Testis (tissue), 5 donors: ENCODE measurements at regions of chr19 and their contacts with region 1.

Region 1: DNA sequence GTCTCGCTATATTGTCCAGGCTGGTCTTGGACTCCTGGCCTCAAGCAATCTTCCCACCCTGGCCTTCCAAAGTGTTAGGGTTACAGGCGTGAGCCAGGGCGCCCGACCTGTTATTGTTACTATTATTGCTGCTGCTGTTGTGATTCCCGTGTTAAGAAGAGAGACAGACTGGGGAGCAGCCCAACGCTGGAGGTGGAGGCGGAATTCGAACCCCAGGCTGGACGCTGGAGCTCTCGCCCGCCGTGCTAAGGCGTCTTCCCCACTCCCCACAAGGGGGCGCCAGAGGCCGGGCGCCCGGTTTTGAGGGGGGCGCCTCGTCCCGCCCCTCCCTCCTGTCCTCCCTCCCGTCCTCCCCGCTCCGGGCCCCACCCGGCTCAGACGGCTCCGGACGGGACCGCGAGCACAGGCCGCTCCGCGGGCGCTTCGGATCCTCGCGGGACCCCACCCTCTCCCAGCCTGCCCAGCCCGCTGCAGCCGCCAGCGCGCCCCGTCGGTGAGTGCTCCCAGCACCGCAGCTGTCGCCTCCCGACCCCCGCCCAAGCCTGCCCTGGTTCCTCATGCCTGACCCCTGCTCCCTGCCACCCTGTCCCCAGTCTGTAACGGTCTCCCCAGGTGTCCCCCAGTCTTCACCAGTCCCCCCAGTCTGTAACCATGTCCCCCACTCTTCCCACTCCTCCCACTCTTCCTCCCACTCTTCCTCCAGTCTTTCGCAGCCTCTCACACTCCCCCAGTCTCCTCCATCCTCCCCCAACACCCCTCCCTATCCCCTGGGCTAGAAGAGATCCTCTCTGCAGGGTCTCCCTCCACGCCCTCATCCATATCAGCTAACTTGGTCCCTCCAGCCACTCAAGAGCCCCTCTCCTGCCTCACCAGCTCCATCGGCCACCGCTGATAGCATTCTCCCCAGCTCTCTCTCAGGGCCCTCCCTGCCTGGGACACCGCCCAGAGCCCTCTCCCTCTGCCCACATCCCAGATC is at the start of gene EHD2:
- DNase-seq: peak; percentile 56
- H3K4me3 ChIP-seq: peak within 1 kb of the TSS; percentile 68 to 72
- H3K27ac ChIP-seq: peak within 1 kb of the TSS; percentile 60 to 88
- H3K4me1 ChIP-seq: peaks cover 17% of the 10 kb centered on the region
- H3K27me3 ChIP-seq: no peaks in the 10 kb centered on the region
- CTCF ChIP-seq: peak; percentile 90 to 94 (median 93)
- POLR2A ChIP-seq: no peak
- total RNA-seq, gene EHD2: 26.8 to 33.9 TPM

Region 2: DNA sequence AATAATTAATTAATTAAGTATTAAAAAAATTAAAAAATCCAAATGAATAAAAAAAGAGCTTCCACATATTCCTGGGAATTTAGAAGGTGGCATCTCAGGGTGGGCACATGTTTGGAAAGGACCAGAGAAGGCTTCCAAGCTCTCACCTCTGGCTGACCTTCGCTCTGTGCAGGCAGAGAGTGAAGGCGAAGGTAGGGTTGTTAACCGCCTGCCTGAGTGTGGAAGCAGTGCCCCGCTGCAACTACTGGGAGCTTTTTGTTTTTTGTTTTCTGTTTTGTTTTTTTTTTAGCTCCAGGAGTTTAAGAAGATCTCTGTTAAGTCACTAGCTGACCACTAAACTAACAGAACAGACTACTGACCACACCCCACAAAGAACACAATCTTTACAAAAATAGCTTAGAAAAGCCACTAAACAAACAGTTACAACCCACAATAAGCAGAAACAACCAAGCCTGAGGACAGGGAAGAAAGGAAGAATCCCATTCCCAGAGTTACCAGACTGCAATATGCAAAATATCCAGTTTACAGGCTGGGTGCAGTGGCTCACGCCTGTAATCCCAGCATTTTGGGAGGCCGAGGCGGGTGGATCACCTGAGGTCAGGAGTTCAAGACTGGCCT is 151.8 kb before region 1 on chr19:
- intact Hi-C with region 1: no loop called
- DNase-seq: no peak
- H3K4me3 ChIP-seq: no peak overlapping the region
- H3K27ac ChIP-seq: no peak overlapping the region
- H3K4me1 ChIP-seq: no peaks in the 10 kb centered on the region
- H3K27me3 ChIP-seq: no peaks in the 10 kb centered on the region
- CTCF ChIP-seq: no peak
- POLR2A ChIP-seq: no peak

Region 3: GRCh38 chr19:47587295-47587694 is 126.0 kb before region 1 on chr19:
- intact Hi-C with region 1: no loop called
- DNase-seq: no peak
- H3K4me3 ChIP-seq: no peak overlapping the region
- H3K27ac ChIP-seq: no peak overlapping the region
- H3K4me1 ChIP-seq: peaks cover 6% of the 10 kb centered on the region
- H3K27me3 ChIP-seq: no peaks in the 10 kb centered on the region
- CTCF ChIP-seq: no peak
- POLR2A ChIP-seq: no peak

Region 4: DNA sequence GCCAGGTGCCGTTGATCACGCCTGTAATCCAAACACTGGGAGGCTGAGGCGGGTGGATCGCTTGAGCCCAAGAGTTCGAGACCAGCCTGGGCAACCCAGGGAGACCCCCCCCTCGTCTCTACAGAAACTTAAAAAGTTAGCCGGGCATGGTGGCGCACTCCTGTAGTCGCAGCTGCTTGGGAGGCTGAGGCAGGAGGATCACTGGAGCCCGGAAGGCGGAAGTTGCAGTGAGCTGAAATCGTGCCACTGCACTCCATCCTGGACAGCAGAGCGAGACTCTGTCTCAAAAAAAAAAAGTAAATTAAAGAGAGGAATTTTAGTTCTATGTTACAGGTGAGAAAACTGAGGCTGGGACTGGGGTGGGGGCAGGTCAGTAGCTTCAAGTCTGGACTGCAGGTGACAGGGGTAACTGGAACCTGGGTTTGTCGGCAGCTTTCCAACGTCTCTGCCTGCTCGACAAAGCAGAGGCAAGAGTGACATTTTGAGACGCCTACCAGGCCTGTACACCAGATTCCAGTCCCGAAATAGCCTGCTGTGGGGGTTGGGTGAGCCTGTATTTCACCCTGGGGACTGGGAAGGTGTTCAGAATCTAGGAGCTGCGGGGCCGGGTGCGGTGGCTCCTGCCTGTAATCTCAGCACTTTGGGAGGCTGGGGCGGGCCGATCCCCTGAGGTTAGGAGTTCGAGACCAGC is 66.3 kb after region 1 on chr19:
- intact Hi-C with region 1: loop called (anchors 10 kb)
- DNase-seq: peak; percentile 43
- H3K4me3 ChIP-seq: peak overlapping the region; percentile 66 to 98
- H3K27ac ChIP-seq: peak overlapping the region; percentile 94 to 98
- H3K4me1 ChIP-seq: no peaks in the 10 kb centered on the region
- H3K27me3 ChIP-seq: no peaks in the 10 kb centered on the region
- CTCF ChIP-seq: no peak
- POLR2A ChIP-seq: no peak